Aorta (tissue), 5 donors: ENCODE measurements at regions of chr14 and their contacts with region 1.

Region 1: GRCh38 chr14:59507063-59507780 is 22.9 kb downstream of the JKAMP start:
- DNase-seq: peak; percentile 56 to 76
- ATAC-seq: peak; percentile 68
- H3K4me3 ChIP-seq: no peak overlapping the region
- H3K27ac ChIP-seq: no peak overlapping the region
- H3K4me1 ChIP-seq: no peaks in the 10 kb centered on the region
- H3K27me3 ChIP-seq: no peaks in the 10 kb centered on the region

Region 2: DNA sequence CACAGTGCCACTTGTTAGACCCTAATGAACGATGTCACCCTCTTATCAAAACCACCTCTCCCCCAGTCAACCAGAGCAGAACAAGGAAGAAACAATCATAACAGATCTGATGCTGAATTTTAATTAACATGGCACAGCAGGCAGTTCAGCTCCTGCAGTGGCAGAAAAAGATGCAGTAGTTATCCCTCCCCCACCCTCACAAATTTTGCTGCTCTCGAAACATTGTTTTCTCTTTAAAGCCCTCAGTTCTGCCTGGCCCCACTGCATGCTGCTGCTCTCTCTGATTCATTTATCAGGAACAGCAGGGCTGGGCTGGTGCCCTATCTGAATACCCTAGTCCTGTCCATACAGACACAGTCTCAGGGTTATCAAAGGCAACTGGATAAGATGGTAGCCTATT is 57.1 kb after region 1 on chr14:
- intact Hi-C with region 1: no loop called
- DNase-seq: no peak
- ATAC-seq: no peak
- H3K4me3 ChIP-seq: no peak overlapping the region
- H3K27ac ChIP-seq: no peak overlapping the region
- H3K4me1 ChIP-seq: no peaks in the 10 kb centered on the region
- H3K27me3 ChIP-seq: no peaks in the 10 kb centered on the region

Region 3: GRCh38 chr14:59576332-59577294 is 69.4 kb after region 1 on chr14 and contains the start of gene CCDC175:
- intact Hi-C with region 1: loop called in 1 of 2 experiments (anchors 10 kb)
- DNase-seq: peak; percentile 91 to 92
- ATAC-seq: peak; percentile 88
- H3K4me3 ChIP-seq: peak within 1 kb of the TSS in 1 of 2 donors; percentile 21
- H3K27ac ChIP-seq: no peak within 1 kb of the TSS
- H3K4me1 ChIP-seq: peaks cover 0 to 2% of the 10 kb centered on the region in 2 donors
- H3K27me3 ChIP-seq: no peaks in the 10 kb centered on the region
- total RNA-seq, gene CCDC175: 0.71 to 1.1 TPM

Region 4: GRCh38 chr14:59688224-59689170 is 181.3 kb after region 1 on chr14:
- intact Hi-C with region 1: loop called (anchors 5 to 10 kb)
- DNase-seq: peak in 1 of 2 donors; percentile 75
- ATAC-seq: peak; percentile 75
- H3K4me3 ChIP-seq: no peak overlapping the region
- H3K27ac ChIP-seq: no peak overlapping the region
- H3K4me1 ChIP-seq: no peaks in the 10 kb centered on the region
- H3K27me3 ChIP-seq: no peaks in the 10 kb centered on the region

Region 5: DNA sequence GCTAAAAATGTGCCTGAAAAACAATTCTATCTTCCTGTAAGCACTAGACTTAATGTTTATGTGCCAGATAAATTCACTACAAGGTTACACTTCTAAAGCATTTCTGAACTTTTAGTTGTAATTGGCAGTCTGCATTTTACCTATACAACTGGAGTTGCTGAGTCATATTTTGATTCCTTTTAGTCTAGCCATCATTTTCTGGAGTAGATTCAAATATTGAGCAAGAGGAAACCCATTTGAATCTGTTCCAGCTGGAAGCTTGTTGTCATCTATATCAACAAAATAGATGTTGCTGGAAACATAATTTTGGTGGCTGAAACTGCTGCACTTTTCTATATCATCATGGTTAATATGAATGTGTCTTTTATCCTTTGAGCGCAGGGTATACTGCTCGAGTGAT is 191.6 kb after region 1 on chr14:
- intact Hi-C with region 1: loop called in 1 of 2 experiments (anchors 10 kb)
- DNase-seq: no peak
- ATAC-seq: no peak
- H3K4me3 ChIP-seq: no peak overlapping the region
- H3K27ac ChIP-seq: no peak overlapping the region
- H3K4me1 ChIP-seq: peaks cover 0 to 2% of the 10 kb centered on the region in 2 donors
- H3K27me3 ChIP-seq: no peaks in the 10 kb centered on the region

Region 6: GRCh38 chr14:59897761-59898383 is 390.6 kb after region 1 on chr14:
- intact Hi-C with region 1: loop called (anchors 5 kb)
- DNase-seq: no peak
- ATAC-seq: peak; percentile 84
- H3K4me3 ChIP-seq: no peak overlapping the region
- H3K27ac ChIP-seq: no peak overlapping the region
- H3K4me1 ChIP-seq: no peaks in the 10 kb centered on the region
- H3K27me3 ChIP-seq: no peaks in the 10 kb centered on the region